IMR-90 (cell line): ENCODE measurements at regions of chr4 and their contacts with region 1.

Region 1: GRCh38 chr4:75895744-75896314 is 6.4 kb downstream of the PPEF2 start:
- DNase-seq: peak; percentile 18
- ATAC-seq: peak; percentile 44; the same call in 1 of the 2 replicates
- H3K4me3 ChIP-seq: no peak overlapping the region
- H3K27ac ChIP-seq: no peak overlapping the region
- H3K4me1 ChIP-seq: no peaks in the 10 kb centered on the region
- H3K27me3 ChIP-seq: peaks cover 10% of the 10 kb centered on the region
- CTCF ChIP-seq: peak; percentile 54
- POLR2A ChIP-seq: no peak
- RAD21 ChIP-seq: peak; percentile 45

Region 2: GRCh38 chr4:76074468-76074867 is 178.6 kb after region 1 on chr4 and contains the start of gene ART3:
- CTCF ChIA-PET with region 1: no interaction called
- POLR2A ChIA-PET with region 1: no interaction called
- dilution Hi-C with region 1: no loop called
- in situ Hi-C with region 1: loop called (anchors 10 kb)
- intact Hi-C with region 1: no loop called
- DNase-seq: peak; percentile 13
- ATAC-seq: peak; percentile 61; the same call in 1 of the 2 replicates
- H3K4me3 ChIP-seq: no peak within 1 kb of the TSS
- H3K27ac ChIP-seq: no peak within 1 kb of the TSS
- H3K4me1 ChIP-seq: no peaks in the 10 kb centered on the region
- H3K27me3 ChIP-seq: peaks cover 5% of the 10 kb centered on the region
- CTCF ChIP-seq: no peak
- POLR2A ChIP-seq: no peak
- RAD21 ChIP-seq: no peak
- total RNA-seq, gene ART3: not detected in 2 replicates

Region 3: DNA sequence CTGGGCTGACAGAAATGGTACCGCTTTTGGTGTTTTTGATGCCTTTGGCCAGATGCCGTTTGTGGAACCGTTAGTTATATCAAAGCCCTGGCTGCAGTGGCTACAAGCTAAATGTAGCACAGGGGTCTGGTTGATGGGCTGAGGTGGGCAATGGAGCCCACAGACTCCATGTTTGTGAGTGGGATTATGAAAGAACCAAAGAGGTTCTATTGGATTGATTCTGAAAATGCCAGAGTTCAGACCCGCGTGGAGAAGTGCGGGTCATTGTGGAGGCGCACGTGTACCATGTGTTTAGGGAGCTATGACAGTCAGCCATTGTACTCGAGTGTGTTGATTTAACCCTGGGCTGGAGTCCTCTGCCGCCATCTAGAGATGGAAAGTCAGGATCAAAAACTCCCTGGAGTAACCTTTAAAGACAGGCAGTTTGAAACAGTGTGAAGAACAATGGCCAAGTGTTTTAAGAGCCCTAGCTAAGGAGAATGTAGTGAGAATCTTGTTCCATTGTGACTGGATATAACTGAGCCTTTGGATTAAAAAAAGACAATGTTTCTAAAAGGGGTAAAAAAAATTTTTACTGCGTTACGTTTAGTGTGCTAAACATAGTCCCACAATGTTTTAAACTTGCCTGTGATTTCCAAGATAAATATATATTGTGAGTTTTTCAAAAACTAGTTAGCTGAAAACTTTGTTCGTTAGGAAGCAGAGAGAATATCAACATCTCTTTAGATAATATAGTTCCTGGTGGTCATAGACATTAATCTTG is 191.4 kb after region 1 on chr4:
- CTCF ChIA-PET with region 1: interaction called, 3 read pairs
- POLR2A ChIA-PET with region 1: no interaction called
- dilution Hi-C with region 1: no loop called
- in situ Hi-C with region 1: no loop called
- intact Hi-C with region 1: loop called (anchors 10 kb)
- DNase-seq: peak; percentile 61
- ATAC-seq: peak; percentile 86
- H3K4me3 ChIP-seq: no peak overlapping the region
- H3K27ac ChIP-seq: no peak overlapping the region
- H3K4me1 ChIP-seq: 0 out of 2 replicates have a peak, but pooled peaks cover 2% of the 10 kb centered on the region
- H3K27me3 ChIP-seq: peaks cover 17% of the 10 kb centered on the region
- CTCF ChIP-seq: peak; percentile 57
- POLR2A ChIP-seq: no peak
- RAD21 ChIP-seq: peak; percentile 54